ENCODE measurements at regions of chr1 and their contacts with region 1.

Region 1: DNA sequence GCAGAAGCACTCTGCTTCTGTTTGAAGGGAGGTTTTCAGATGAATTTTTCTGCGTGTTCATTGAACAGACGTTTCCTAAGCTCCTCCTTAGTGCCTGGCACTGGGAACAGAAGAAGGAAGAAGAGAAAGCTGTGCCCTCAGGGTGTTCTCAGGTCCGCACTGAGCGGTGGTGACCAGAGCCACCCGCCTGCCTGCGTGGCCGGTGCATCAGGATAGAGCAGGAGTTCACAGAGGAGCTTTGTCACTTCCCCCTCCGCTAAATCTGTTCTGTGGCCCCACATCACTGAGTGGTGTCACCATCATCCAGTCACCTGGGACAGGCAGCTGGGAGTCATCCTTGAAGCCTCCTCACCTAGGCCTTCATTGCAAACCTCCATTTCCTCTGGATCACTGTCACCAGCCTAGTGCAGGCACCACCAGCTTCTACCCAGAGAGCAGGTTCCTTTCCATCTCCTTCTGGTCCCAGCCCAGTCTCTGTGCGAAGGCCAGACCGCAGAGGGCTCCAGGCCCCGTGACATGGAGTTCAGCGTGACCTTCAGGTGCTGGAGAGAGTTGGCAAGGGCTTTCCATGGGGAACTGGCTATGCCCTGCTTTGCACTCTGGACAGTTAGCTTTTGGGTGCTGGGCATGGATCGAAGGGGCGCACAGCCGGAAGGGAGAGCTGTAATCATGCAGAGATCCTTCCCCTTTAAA is 21.7 kb downstream of the PARK7 start:
- DNase-seq: no peak
- H3K4me3 ChIP-seq: no peak overlapping the region
- H3K27ac ChIP-seq: no peak overlapping the region
- H3K4me1 ChIP-seq: peaks cover 0 to 2% of the 10 kb centered on the region in 2 donors
- H3K27me3 ChIP-seq: no peaks in the 10 kb centered on the region
- CTCF ChIP-seq: no peak

Region 2: DNA sequence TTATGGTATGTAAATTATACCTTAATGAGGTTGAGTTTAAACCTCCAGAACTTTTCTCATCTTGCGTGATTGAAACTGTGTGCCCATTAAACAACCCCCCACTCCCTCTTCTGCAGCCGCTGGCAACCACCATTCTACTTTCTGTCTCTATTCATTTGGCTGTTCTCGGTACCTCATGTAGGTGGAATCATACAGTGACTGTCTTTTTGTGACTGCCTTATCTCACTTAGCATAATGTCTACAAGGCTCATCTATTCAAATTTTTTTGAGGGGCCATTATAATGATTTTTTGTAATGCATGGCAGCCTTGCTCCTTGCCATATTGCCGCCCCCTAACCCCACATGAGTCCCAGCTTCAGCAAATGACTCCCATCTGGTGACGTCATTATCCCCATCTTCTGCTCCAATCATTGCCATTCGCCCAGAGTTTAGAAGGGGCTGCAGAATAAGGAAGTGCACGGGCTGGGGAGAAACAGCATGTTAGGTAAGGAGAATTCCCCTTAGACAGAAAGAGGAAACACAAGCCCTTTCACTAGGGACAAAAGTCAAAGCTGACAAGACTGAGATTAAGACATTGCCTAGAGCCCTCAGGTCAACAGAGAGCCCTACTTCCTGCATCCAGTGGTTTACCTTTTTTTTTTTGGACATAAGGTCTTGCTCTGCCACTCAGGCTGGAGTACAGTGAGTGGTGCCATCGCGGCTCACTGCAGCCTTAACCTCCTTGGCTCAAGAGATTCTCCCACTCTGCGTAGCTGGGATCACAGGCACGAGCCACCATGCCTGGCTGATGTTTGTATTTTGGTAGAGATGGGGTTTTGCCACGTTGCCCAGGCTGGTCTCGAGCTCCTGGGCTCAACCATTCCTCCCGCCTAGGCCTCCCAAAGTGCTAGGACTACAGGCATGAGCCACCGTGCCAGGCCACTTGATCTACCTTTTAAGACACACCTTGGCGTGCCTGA is 121.3 kb after region 1 on chr1:
- intact Hi-C with region 1: no loop called
- DNase-seq: no peak
- H3K4me3 ChIP-seq: no peak overlapping the region
- H3K27ac ChIP-seq: no peak overlapping the region
- H3K4me1 ChIP-seq: no peaks in the 10 kb centered on the region
- H3K27me3 ChIP-seq: no peaks in the 10 kb centered on the region
- CTCF ChIP-seq: no peak

Region 3: GRCh38 chr1:8314346-8315280 is 331.4 kb after region 1 on chr1:
- intact Hi-C with region 1: loop called (anchors 1 kb)
- DNase-seq: peak in 1 of 2 donors; percentile 83
- H3K4me3 ChIP-seq: no peak overlapping the region
- H3K27ac ChIP-seq: no peak overlapping the region
- H3K4me1 ChIP-seq: peaks cover 0 to 14% of the 10 kb centered on the region in 2 donors
- H3K27me3 ChIP-seq: no peaks in the 10 kb centered on the region
- CTCF ChIP-seq: peak; percentile 84 to 92 (median 87)

Measured in ascending aorta (tissue), 2 donors.